AG04449 (cell line): ENCODE measurements at regions of chr12 and their contacts with region 1.

Region 1: GRCh38 chr12:121793838-121794533 is 498 bp upstream of the RHOF start:
- DNase-seq: peak; percentile 69
- H3K4me3 ChIP-seq: peak overlapping the region; percentile 59
- CTCF ChIP-seq: peak; percentile 100

Region 2: GRCh38 chr12:121472150-121472905 is 321.7 kb before region 1 on chr12:
- CTCF ChIA-PET with region 1: no interaction called
- POLR2A ChIA-PET with region 1: no interaction called
- DNase-seq: no peak
- H3K4me3 ChIP-seq: no peak overlapping the region
- CTCF ChIP-seq: no peak

Region 3: GRCh38 chr12:121513464-121514183 is 280.4 kb before region 1 on chr12:
- CTCF ChIA-PET with region 1: no interaction called
- POLR2A ChIA-PET with region 1: no interaction called
- DNase-seq: no peak
- H3K4me3 ChIP-seq: no peak overlapping the region
- CTCF ChIP-seq: no peak

Region 4: DNA sequence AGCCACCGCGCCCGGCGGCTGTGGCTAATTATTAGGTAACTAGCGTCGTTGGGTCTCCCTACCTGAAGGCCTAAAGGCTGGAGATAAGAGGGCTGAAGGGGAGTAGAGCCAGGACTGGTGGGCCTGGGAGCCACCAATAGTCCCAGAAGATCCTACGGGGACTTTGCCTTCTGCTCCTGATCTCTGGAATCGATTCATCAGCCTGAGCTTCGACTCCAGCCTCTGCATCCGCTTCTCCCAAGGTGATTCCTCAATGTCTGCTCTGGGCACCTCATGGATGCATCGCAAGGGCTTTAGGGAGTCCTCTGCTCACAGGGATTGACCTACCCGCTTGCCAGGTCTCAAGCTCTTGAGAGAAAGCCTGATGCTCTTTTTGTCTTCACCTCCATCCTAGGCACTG is 198.5 kb before region 1 on chr12:
- CTCF ChIA-PET with region 1: no interaction called
- POLR2A ChIA-PET with region 1: no interaction called
- DNase-seq: no peak
- H3K4me3 ChIP-seq: no peak overlapping the region
- CTCF ChIP-seq: no peak

Region 5: GRCh38 chr12:121649819-121650353 is 144.1 kb before region 1 on chr12:
- CTCF ChIA-PET with region 1: no interaction called
- POLR2A ChIA-PET with region 1: no interaction called
- DNase-seq: no peak
- H3K4me3 ChIP-seq: no peak overlapping the region
- CTCF ChIP-seq: no peak

Region 6: GRCh38 chr12:121697098-121697698 is 96.8 kb before region 1 on chr12:
- CTCF ChIA-PET with region 1: interaction called, 191 read pairs
- POLR2A ChIA-PET with region 1: interaction called, 3 read pairs
- DNase-seq: no peak
- H3K4me3 ChIP-seq: no peak overlapping the region
- CTCF ChIP-seq: no peak

Region 7: DNA sequence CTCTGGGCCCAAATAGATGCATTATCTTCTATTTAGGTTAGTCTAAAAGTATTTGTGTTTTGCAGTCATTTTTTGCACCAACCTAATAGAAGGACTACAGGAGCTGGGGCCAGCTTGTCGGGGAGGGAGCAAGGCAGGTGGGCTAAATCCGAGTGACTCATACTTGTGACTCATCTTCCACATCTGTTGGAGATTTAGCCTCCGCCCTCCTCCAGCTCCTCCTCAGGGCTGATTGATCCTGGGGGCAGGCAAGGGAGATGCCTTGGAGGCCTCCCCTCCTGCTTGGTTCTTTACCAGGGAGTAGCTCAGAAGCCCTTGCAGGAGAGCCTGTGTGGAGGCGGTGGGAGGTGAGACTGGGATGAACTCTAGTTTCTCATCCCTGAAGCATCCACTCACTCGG is 28.4 kb before region 1 on chr12:
- CTCF ChIA-PET with region 1: interaction called, 34 read pairs
- POLR2A ChIA-PET with region 1: no interaction called
- DNase-seq: no peak
- H3K4me3 ChIP-seq: no peak overlapping the region
- CTCF ChIP-seq: no peak

Region 8: GRCh38 chr12:121823101-121823726 is 29.2 kb after region 1 on chr12:
- CTCF ChIA-PET with region 1: interaction called, 1,100 read pairs
- POLR2A ChIA-PET with region 1: no interaction called
- DNase-seq: no peak
- H3K4me3 ChIP-seq: no peak overlapping the region
- CTCF ChIP-seq: peak; percentile 12

Region 9: DNA sequence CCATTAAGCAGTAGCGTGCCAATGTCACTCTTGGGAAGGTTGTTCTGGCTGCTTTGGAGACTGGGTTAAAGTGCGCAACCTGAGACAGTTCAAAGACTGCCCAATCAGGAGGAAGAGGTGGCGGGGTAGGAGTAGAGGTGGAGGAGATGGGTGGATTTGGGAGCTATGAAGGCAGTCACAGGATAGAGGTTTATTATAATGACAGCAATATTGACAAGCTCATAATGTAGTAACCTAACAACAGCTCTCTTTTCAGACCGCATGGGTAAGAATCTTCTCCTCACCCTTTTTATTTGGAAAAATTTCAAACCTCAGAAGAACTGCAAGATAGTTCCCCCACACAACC is 89.3 kb after region 1 on chr12:
- CTCF ChIA-PET with region 1: interaction called, 230 read pairs
- POLR2A ChIA-PET with region 1: interaction called, 12 read pairs
- DNase-seq: no peak
- H3K4me3 ChIP-seq: no peak overlapping the region
- CTCF ChIP-seq: no peak